Kidney (tissue), 22 donors: ENCODE measurements at regions of chr15 and their contacts with region 1.

Region 1: DNA sequence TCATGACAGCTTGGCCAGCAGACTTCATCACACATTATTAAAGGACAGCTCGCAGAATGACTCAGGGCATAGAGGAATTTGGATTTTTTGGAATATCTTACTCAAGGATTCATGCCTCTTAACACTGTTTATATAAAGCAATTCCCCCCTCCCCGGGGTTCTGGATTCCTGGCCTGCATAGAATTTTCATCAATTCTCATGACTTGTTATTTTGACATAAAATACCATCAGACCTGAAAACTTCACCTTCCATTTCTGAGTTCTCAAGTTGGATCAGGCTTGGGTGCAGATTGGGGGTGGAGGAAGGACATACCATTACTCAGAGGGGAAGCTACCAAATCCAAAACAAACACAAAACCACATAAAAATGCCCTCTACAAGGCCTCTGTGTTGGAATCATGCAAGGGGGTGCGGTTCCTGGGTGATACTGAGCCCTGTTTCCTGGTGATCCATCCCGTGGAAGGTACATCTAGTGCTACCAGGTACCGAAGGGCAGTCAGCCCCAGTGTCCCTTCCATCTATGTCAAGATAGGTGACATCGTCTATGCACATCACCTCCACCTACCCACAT is 95.3 kb downstream of the DAPK2 start:
- DNase-seq: peak in 1 of 5 donors; percentile 5
- H3K4me3 ChIP-seq: no peak overlapping the region
- H3K27ac ChIP-seq: peak overlapping the region in 1 of 2 donors; percentile 1
- H3K4me1 ChIP-seq: peaks cover 0 to 4% (median 0%) of the 10 kb centered on the region in 3 donors
- H3K27me3 ChIP-seq: no peaks in the 10 kb centered on the region
- CTCF ChIP-seq: no peak

Region 2: GRCh38 chr15:64029633-64030032 is 78.6 kb after region 1 on chr15:
- intact Hi-C with region 1: loop called (anchors 10 kb)
- DNase-seq: no peak
- H3K4me3 ChIP-seq: no peak overlapping the region
- H3K27ac ChIP-seq: no peak overlapping the region
- H3K4me1 ChIP-seq: no peaks in the 10 kb centered on the region
- H3K27me3 ChIP-seq: no peaks in the 10 kb centered on the region
- CTCF ChIP-seq: no peak